ENCODE measurements at regions of chr7 and their contacts with region 1.

Region 1: GRCh38 chr7:81285142-81285871 is 366.5 kb upstream of the SEMA3C start:
- DNase-seq: peak; percentile 75
- ATAC-seq: peak; percentile 91
- H3K4me3 ChIP-seq: peak overlapping the region; percentile 28; the same call in 1 of the 2 replicates
- H3K27ac ChIP-seq: peak overlapping the region; percentile 70
- H3K4me1 ChIP-seq: peaks cover 13% of the 10 kb centered on the region
- H3K27me3 ChIP-seq: no peaks in the 10 kb centered on the region
- CTCF ChIP-seq: no peak

Region 2: GRCh38 chr7:80960244-80960795 is 325.0 kb before region 1 on chr7:
- CTCF ChIA-PET with region 1: no interaction called
- POLR2A ChIA-PET with region 1: no interaction called
- intact Hi-C with region 1: no loop called
- DNase-seq: peak; percentile 19
- ATAC-seq: no peak
- H3K4me3 ChIP-seq: no peak overlapping the region
- H3K27ac ChIP-seq: no peak overlapping the region
- H3K4me1 ChIP-seq: no peaks in the 10 kb centered on the region
- H3K27me3 ChIP-seq: no peaks in the 10 kb centered on the region
- CTCF ChIP-seq: no peak

Region 3: GRCh38 chr7:81074406-81074805 is 210.9 kb before region 1 on chr7:
- CTCF ChIA-PET with region 1: no interaction called
- POLR2A ChIA-PET with region 1: no interaction called
- intact Hi-C with region 1: loop called (anchors 5 kb)
- DNase-seq: no peak
- ATAC-seq: no peak
- H3K4me3 ChIP-seq: no peak overlapping the region
- H3K27ac ChIP-seq: peak overlapping the region; percentile 98
- H3K4me1 ChIP-seq: peaks cover 30% of the 10 kb centered on the region
- H3K27me3 ChIP-seq: no peaks in the 10 kb centered on the region
- CTCF ChIP-seq: no peak

Region 4: GRCh38 chr7:81333004-81333403 is 47.7 kb after region 1 on chr7:
- CTCF ChIA-PET with region 1: no interaction called
- POLR2A ChIA-PET with region 1: no interaction called
- intact Hi-C with region 1: no loop called
- DNase-seq: peak; percentile 46
- ATAC-seq: peak; percentile 76
- H3K4me3 ChIP-seq: no peak overlapping the region
- H3K27ac ChIP-seq: no peak overlapping the region
- H3K4me1 ChIP-seq: 0 out of 2 replicates have a peak, but pooled peaks cover 6% of the 10 kb centered on the region
- H3K27me3 ChIP-seq: no peaks in the 10 kb centered on the region
- CTCF ChIP-seq: no peak